Heart left ventricle (tissue), 16 donors: ENCODE measurements at regions of chr2 and their contacts with region 1.

Region 1: GRCh38 chr2:107936433-107937359 is 49.6 kb upstream of the SLC5A7 start:
- DNase-seq: no peak
- ATAC-seq: no peak
- H3K4me3 ChIP-seq: no peak overlapping the region
- H3K27ac ChIP-seq: no peak overlapping the region
- H3K4me1 ChIP-seq: no peaks in the 10 kb centered on the region
- H3K27me3 ChIP-seq: peaks cover 0 to 20% (median 0%) of the 10 kb centered on the region in 9 donors
- CTCF ChIP-seq: peak; percentile 19 to 55 (median 40)
- POLR2A ChIP-seq: no peak

Region 2: DNA sequence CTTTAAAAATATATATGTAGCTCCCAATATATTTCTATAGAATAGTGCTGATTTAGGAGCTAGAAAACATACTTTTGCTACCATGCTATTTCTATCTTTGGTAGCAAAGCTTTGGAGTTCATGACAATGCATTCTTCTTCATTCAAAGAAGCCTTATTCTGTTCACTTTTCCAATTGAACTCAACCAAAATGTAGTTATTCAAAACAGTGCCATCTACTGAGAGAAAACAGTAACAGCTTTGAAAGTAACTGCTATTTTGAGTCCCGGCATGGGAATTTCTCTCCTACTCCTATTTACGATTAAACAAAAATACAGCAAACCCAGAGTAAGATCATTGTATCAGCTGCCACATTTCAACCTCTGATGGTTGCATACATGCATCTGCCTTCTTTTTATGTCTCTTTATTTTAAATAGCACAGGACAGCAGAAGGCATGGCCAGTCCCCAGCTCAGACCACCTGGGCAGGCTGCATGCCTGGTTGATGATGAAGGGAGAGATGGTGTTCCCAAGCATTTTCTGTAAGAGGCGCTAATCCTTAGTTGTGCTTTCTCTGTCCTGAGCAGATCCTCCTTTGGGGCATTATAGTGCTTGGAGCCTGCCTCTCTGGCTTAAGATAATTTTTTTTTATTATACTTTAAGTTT is 233.4 kb after region 1 on chr2:
- intact Hi-C with region 1: loop called in 2 of 10 experiments (anchors 10 kb)
- DNase-seq: no peak
- ATAC-seq: no peak
- H3K4me3 ChIP-seq: no peak overlapping the region
- H3K27ac ChIP-seq: no peak overlapping the region
- H3K4me1 ChIP-seq: no peaks in the 10 kb centered on the region
- H3K27me3 ChIP-seq: peaks cover 0 to 14% (median 0%) of the 10 kb centered on the region in 9 donors
- CTCF ChIP-seq: peak in 10 of 12 donors; percentile 22 to 58 (median 34)
- POLR2A ChIP-seq: no peak

Region 3: DNA sequence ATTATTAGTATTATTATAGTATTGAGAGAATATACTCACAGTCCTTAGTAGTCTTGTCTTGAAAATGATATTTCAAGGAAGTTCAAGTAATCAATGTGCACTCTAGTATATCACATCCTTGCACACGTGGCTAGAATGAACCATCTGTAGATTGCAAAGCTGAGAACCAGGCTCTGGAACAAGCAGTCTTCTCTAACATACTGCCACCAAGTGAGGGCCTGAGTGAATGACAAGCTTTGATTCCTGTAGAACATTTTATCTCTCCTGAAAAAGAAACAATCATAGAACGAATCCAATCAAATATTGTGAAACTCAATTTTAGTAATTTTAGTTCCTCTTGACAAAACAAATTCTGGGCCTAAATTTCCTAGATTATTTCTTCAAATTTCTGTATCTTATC is 247.7 kb after region 1 on chr2:
- intact Hi-C with region 1: loop called in 3 of 10 experiments (anchors 10 kb)
- DNase-seq: no peak
- ATAC-seq: no peak
- H3K4me3 ChIP-seq: no peak overlapping the region
- H3K27ac ChIP-seq: no peak overlapping the region
- H3K4me1 ChIP-seq: no peaks in the 10 kb centered on the region
- H3K27me3 ChIP-seq: no peaks in the 10 kb centered on the region
- CTCF ChIP-seq: peak in 5 of 12 donors; percentile 8 to 35 (median 25)
- POLR2A ChIP-seq: no peak